ENCODE measurements at regions of chr5 and their contacts with region 1.

Region 1: DNA sequence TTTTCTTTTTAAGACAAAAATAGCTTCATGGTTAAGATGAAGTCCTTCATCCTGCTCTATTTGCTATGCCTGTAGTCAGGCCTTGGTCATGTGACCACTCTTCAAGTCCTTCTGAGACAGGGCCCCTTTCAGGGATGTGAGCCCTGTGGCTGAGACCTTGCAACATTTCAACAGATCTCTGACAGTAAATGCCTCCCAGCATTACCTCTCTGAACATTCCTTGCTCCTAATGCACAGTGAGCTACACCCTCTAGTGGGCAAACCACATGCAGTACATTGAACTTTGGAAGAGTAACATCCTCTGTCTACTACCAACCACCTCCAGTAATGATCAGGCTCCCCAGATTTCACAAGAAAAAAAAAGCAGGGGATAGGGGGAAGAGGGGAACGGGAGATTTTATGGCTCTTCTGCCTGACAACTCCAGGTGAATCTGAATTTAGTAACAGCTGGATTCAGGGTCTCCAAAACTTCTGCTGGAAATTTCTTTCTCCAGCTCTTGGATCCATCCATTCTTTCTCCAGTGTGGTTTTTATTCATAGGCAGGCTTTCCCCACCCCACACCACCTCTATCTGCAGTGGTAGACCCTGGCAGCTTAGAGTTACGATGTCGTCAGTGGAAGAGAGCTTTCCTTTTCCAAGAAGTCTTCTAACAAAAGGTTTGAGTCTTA is 8.9 kb upstream of the FBXO38 start:
- DNase-seq: peak; percentile 31
- H3K4me3 ChIP-seq: no peak overlapping the region
- H3K27ac ChIP-seq: no peak overlapping the region
- H3K4me1 ChIP-seq: no peaks in the 10 kb centered on the region
- H3K27me3 ChIP-seq: no peaks in the 10 kb centered on the region
- CTCF ChIP-seq: peak; percentile 66
- EP300 ChIP-seq: no peak
- RAD21 ChIP-seq: peak; percentile 82

Region 2: GRCh38 chr5:148179234-148179824 is 195.5 kb before region 1 on chr5:
- CTCF ChIA-PET with region 1: interaction called, 24 read pairs
- POLR2A ChIA-PET with region 1: no interaction called
- DNase-seq: peak; percentile 12
- H3K4me3 ChIP-seq: no peak overlapping the region
- H3K27ac ChIP-seq: no peak overlapping the region
- H3K4me1 ChIP-seq: no peaks in the 10 kb centered on the region
- H3K27me3 ChIP-seq: no peaks in the 10 kb centered on the region
- CTCF ChIP-seq: peak; percentile 82
- EP300 ChIP-seq: no peak
- RAD21 ChIP-seq: peak; percentile 91

Region 3: DNA sequence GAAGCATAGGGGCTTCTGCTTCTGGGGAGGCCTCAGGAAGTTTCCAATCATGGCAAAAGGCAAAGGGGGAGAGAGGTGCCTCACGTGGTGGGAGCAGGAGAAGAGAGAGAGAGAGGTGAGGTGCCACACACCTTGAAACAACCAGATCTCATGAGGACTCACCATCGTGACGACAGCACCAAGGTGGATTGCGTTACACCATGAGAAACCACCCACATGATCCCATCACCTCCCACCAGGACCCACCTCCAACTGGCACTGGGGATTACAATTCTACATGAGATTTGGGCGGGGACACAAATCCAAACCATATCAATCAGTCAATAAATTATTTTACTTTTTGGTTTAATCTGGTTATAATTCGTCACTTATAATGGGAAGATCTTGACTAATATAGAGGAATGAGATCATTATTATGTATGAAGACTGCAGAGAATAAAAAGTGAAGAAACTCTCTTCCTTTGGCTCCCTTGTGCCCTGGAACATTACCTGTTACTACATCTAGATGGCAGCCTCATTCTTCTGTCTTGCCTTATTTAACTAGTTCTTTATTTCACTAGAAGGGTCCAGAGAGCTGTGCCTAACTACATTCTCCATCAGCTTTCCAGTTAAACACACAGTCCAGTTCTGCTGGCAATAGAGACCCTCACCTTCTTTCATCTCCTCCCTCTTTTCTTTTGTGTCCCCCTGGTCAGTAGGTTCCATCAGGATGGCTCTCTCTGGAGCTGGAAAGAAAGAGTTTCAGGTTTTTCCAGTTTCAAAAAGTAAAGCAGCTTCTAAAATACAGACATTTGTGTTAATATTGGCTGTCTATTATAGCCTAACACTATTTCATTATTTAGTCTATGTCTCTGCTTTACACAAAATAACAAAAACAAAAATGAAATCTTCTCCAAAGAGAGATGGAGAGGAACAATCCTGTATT is 84.3 kb before region 1 on chr5:
- CTCF ChIA-PET with region 1: interaction called, 20 read pairs
- POLR2A ChIA-PET with region 1: no interaction called
- DNase-seq: peak; percentile 16
- H3K4me3 ChIP-seq: no peak overlapping the region
- H3K27ac ChIP-seq: no peak overlapping the region
- H3K4me1 ChIP-seq: no peaks in the 10 kb centered on the region
- H3K27me3 ChIP-seq: no peaks in the 10 kb centered on the region
- CTCF ChIP-seq: peak; percentile 54
- EP300 ChIP-seq: no peak
- RAD21 ChIP-seq: peak; percentile 71

Region 4: DNA sequence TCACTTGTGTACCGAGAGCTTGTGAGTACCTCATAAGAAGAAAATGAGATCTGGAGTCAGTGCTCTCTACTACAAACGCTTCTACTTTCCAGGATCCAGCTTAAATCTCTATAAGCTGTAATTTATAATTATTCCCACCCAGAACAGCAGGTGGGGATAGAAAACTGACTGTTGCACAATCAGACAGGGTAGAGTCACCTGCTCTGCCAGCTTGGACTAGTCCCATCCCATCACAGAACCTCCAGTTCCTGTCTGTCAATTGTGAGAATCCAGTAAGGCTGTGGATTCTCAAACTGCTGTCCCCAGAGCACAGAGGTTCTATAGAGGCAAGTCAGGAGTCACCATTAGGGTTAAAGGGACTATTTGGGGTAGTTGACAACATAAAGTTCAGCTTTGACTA is 60.6 kb before region 1 on chr5:
- CTCF ChIA-PET with region 1: interaction called, 12 read pairs
- POLR2A ChIA-PET with region 1: no interaction called
- DNase-seq: no peak
- H3K4me3 ChIP-seq: no peak overlapping the region
- H3K27ac ChIP-seq: no peak overlapping the region
- H3K4me1 ChIP-seq: no peaks in the 10 kb centered on the region
- H3K27me3 ChIP-seq: no peaks in the 10 kb centered on the region
- CTCF ChIP-seq: no peak
- EP300 ChIP-seq: no peak
- RAD21 ChIP-seq: 0 out of 2 replicates have a peak, but pooled peaks have one; percentile 8

Region 5: DNA sequence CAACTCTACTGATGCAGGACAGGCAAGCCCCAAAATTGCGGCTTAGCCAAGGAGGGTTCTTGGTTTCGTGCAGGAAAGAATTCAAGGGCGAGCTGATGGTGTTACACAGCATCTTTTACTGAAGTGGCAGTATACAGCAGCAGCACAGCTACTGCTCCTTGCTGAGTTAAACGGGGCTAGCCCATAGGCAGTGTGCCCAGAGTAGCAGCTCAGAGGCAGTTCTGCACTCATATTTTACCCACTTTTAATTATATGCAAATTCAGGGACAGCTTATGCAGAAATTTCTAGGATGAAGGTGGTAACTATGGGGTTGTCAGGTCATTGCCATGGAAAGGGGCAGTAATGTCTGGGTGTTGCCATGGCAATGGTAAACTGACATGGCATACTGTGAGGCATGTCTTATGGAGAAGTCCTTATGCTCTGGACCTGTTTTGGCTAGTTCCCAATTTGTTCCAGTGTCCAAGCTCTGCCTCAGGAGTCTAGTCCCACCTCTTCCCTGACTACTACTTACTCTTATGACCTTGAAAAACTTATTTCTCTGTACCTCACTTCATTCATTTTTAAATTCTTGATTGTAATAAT is 41.5 kb before region 1 on chr5:
- CTCF ChIA-PET with region 1: no interaction called
- POLR2A ChIA-PET with region 1: no interaction called
- DNase-seq: no peak
- H3K4me3 ChIP-seq: no peak overlapping the region
- H3K27ac ChIP-seq: no peak overlapping the region
- H3K4me1 ChIP-seq: no peaks in the 10 kb centered on the region
- H3K27me3 ChIP-seq: no peaks in the 10 kb centered on the region
- CTCF ChIP-seq: no peak
- EP300 ChIP-seq: no peak
- RAD21 ChIP-seq: no peak

Region 6: GRCh38 chr5:148364343-148364742 is 10.5 kb before region 1 on chr5:
- CTCF ChIA-PET with region 1: interaction called, 13 read pairs
- POLR2A ChIA-PET with region 1: no interaction called
- DNase-seq: no peak
- H3K4me3 ChIP-seq: no peak overlapping the region
- H3K27ac ChIP-seq: no peak overlapping the region
- H3K4me1 ChIP-seq: no peaks in the 10 kb centered on the region
- H3K27me3 ChIP-seq: no peaks in the 10 kb centered on the region
- CTCF ChIP-seq: no peak
- EP300 ChIP-seq: no peak
- RAD21 ChIP-seq: no peak

Region 7: GRCh38 chr5:148606296-148606695 is 231.5 kb after region 1 on chr5:
- CTCF ChIA-PET with region 1: no interaction called
- POLR2A ChIA-PET with region 1: no interaction called
- DNase-seq: no peak
- H3K4me3 ChIP-seq: no peak overlapping the region
- H3K27ac ChIP-seq: no peak overlapping the region
- H3K4me1 ChIP-seq: no peaks in the 10 kb centered on the region
- H3K27me3 ChIP-seq: no peaks in the 10 kb centered on the region
- CTCF ChIP-seq: no peak
- EP300 ChIP-seq: no peak
- RAD21 ChIP-seq: no peak

Region 8: DNA sequence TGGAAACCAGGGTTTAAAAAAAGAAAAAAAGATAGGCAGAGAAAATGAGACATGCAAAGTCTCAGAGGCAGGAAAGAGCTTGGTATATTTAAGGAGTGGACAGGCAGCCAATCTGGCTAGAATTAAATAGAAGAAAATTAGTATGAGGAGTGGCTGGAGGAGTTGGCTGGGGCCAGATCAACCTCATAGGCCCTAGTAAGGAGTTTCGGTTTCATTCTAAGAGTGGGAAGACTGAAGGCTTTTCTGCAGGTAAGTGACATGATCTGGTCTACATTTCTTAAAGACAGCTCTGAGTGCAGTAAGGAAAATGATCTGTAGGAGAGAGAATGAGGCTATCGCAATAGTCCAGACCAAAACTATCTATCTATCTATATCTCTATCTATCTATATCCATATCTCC is 479.0 kb after region 1 on chr5:
- CTCF ChIA-PET with region 1: no interaction called
- POLR2A ChIA-PET with region 1: no interaction called
- DNase-seq: no peak
- H3K4me3 ChIP-seq: no peak overlapping the region
- H3K27ac ChIP-seq: no peak overlapping the region
- H3K4me1 ChIP-seq: no peaks in the 10 kb centered on the region
- H3K27me3 ChIP-seq: no peaks in the 10 kb centered on the region
- CTCF ChIP-seq: no peak
- EP300 ChIP-seq: no peak
- RAD21 ChIP-seq: no peak

Measured in SK-N-SH (cell line).